Activated CD4-positive, alpha-beta memory T cell treated with anti-CD3 and anti-CD28 coated beads, Interleukin-2, amount 10 ng/mL, durations not matched to agents 7 days and 5 days (primary cell): ENCODE measurements at regions of chr12 and their contacts with region 1.

Region 1: GRCh38 chr12:42237052-42237852 is 796 bp downstream of the YAF2 start:
- DNase-seq: peak; percentile 78
- H3K4me3 Mint-ChIP-seq: peak overlapping the region; percentile 79
- H3K27ac Mint-ChIP-seq: peak overlapping the region; percentile 75
- H3K4me1 Mint-ChIP-seq: peaks cover 52% of the 10 kb centered on the region
- H3K27me3 Mint-ChIP-seq: no peaks in the 10 kb centered on the region

Region 2: DNA sequence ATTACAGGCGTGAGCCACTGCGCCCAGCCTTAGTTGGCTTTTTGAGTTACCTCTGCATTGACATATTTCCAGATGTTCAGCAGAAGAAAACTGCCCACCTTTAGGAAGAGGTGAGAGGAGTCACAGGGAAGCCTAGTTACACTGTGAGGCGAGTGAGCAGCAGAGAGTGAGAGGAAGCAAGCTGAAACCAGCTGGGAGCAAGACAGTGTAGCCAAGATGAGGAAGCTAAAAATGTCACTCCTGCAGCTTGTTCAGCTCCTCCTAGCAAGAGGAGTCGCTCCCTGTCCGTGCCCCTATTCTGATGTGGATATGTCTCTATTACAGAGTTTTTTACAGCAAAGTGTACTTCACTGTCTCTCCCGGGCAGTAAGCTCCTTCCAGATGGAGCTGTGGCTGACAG is 220.2 kb before region 1 on chr12:
- CTCF ChIA-PET with region 1: no interaction called
- POLR2A ChIA-PET with region 1: no interaction called
- DNase-seq: no peak
- H3K4me3 Mint-ChIP-seq: no peak overlapping the region
- H3K27ac Mint-ChIP-seq: no peak overlapping the region
- H3K4me1 Mint-ChIP-seq: peaks cover 2% of the 10 kb centered on the region
- H3K27me3 Mint-ChIP-seq: peaks cover 2% of the 10 kb centered on the region

Region 3: DNA sequence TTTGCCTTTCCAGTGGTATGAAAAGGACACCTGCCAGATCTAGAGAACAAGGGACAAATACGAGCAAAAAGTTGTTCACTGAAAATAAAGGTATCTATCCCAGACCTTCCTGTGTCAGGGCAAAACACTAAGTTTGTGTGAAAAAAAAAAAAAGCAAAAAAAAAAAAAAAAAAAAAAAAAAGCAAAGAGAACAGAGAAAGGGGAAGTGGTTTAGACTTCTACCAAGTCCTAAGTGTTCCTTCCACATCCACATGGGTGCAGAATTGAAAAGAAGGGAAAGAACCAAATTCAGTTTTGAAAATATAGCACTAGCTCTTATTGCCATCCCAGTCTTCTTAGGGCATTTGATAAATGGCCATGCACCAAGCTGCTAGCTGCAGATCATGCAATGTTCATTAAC is 46.9 kb after region 1 on chr12:
- CTCF ChIA-PET with region 1: no interaction called
- POLR2A ChIA-PET with region 1: no interaction called
- DNase-seq: no peak
- H3K4me3 Mint-ChIP-seq: no peak overlapping the region
- H3K27ac Mint-ChIP-seq: no peak overlapping the region
- H3K4me1 Mint-ChIP-seq: peaks cover 3% of the 10 kb centered on the region
- H3K27me3 Mint-ChIP-seq: peaks cover 4% of the 10 kb centered on the region

Region 4: DNA sequence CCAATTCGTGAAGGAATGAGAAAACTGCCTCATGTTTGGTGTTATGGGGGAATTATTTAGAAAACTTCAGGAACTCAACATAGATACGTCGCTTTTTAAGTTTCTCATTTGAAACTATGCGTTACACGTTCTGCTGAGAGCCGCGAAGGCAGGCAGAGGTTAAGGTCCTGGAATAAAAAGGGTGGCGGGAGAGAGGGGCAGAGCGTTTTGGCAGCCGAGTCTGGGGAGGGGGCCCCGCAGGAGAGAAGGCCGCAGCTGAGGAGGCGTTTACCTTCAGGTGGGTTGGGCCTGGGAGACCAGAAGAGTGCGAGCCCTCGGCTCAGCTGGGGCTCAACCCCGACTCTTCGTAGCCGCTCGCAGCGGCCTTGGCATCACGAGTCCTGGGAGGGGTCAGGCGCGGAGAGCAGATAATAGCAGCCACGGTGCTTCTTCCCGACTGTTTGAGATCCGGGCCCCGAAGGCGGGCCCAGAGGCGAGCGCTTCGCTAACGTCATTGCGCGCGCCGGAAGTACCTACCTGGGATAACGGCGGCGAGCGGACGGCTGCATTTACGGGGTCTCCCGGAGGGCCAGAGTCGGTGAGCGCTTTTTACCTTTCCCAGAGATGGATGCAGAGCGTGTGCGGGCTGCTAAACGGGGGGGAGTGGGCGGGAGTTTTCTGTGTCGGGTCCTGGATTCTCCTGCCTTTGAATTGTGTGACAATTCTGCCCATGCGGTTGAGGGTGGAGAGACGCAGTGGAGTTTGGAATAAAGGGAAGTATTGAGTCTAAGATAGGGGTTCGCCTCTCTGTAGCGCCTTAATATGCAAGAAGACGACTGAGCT is 88.6 kb after region 1 on chr12 and contains the starts of genes PPHLN1 and ZCRB1:
- CTCF ChIA-PET with region 1: interaction called, 11 read pairs
- POLR2A ChIA-PET with region 1: interaction called, 10 read pairs
- DNase-seq: peak; percentile 83
- H3K4me3 Mint-ChIP-seq: peak within 1 kb of the TSS; percentile 88
- H3K27ac Mint-ChIP-seq: peak within 1 kb of the TSS; percentile 92
- H3K4me1 Mint-ChIP-seq: peaks cover 35% of the 10 kb centered on the region
- H3K27me3 Mint-ChIP-seq: no peaks in the 10 kb centered on the region
- total RNA-seq, gene PPHLN1: 74.1 to 81.9 TPM
- total RNA-seq, gene ZCRB1: 53.3 to 54.9 TPM